ENCODE measurements at regions of chr11 and their contacts with region 1.

Region 1: GRCh38 chr11:117426269-117426685 is 98.6 kb downstream of the CEP164 start:
- DNase-seq: peak; percentile 85 to 91
- H3K4me3 ChIP-seq: no peak overlapping the region
- H3K4me3 Mint-ChIP-seq: no peak overlapping the region
- H3K27ac Mint-ChIP-seq: no peak overlapping the region
- H3K4me1 ChIP-seq: no peaks in the 10 kb centered on the region
- H3K4me1 Mint-ChIP-seq: no peaks in the 10 kb centered on the region
- H3K27me3 ChIP-seq: 0 out of 2 replicates have a peak, but pooled peaks cover 1% of the 10 kb centered on the region
- H3K27me3 Mint-ChIP-seq: peaks cover 12% of the 10 kb centered on the region
- CTCF ChIP-seq: peak; percentile 99 to 100

Region 2: DNA sequence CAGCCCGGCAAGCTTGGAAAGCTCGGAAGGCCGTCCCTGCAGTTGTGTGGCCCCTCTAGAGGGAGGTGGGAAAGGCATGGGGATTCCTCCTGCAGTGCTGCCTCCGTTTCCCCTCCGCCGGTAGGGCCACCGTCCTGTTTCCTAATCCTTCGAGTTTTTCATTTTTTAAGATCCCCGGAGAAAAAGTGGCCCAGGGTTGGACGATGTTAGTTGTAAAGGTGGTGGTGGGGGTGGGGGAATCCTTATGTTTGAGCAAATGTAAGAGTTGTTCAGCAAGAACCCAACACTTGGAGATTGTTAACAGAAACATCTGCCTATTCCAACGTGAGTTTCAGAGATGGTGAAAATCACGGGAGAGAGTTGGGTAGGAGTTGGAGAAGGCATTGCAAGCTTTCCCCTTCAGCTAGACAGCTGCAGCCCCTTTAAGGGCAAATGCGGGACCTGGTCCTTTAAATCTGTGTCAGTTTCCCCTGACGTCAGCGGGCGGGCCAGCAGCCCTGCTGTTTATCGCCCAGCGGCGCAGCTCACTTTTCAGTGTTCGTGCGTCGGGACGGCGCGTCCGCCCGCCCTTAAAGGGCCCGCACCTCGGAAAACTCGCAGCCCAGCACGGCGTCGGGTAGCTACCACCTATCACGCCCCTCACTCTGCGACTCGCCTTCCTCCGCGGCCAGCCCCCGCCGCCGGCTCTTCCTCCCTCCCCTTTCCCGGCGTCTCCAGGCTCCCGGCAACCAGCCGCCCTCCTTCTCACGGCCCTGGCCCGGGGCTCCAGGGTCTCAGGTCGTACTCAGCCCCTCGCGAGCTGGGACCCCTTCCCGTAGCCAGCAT is 247.9 kb before region 1 on chr11 and contains the start of gene SIDT2:
- CTCF ChIA-PET with region 1: no interaction called
- POLR2A ChIA-PET with region 1: no interaction called
- intact Hi-C with region 1: no loop called
- DNase-seq: peak; percentile 96 to 97
- H3K4me3 ChIP-seq: peak within 1 kb of the TSS; percentile 87
- H3K4me3 Mint-ChIP-seq: peak within 1 kb of the TSS; percentile 97
- H3K27ac Mint-ChIP-seq: peak within 1 kb of the TSS; percentile 96
- H3K4me1 ChIP-seq: peaks cover 20% of the 10 kb centered on the region
- H3K4me1 Mint-ChIP-seq: peaks cover 23% of the 10 kb centered on the region
- H3K27me3 ChIP-seq: no peaks in the 10 kb centered on the region
- H3K27me3 Mint-ChIP-seq: no peaks in the 10 kb centered on the region
- CTCF ChIP-seq: no peak
- total RNA-seq, gene SIDT2: 57.2 and 61.7 TPM in 2 replicates

Region 3: GRCh38 chr11:117410861-117411710 is 15.2 kb before region 1 on chr11:
- CTCF ChIA-PET with region 1: interaction called, 15 read pairs
- POLR2A ChIA-PET with region 1: no interaction called
- intact Hi-C with region 1: no loop called
- DNase-seq: peak in 1 of 2 experiments; percentile 35
- H3K4me3 ChIP-seq: no peak overlapping the region
- H3K4me3 Mint-ChIP-seq: no peak overlapping the region
- H3K27ac Mint-ChIP-seq: no peak overlapping the region
- H3K4me1 ChIP-seq: no peaks in the 10 kb centered on the region
- H3K4me1 Mint-ChIP-seq: no peaks in the 10 kb centered on the region
- H3K27me3 ChIP-seq: no peaks in the 10 kb centered on the region
- H3K27me3 Mint-ChIP-seq: no peaks in the 10 kb centered on the region
- CTCF ChIP-seq: no peak

Region 4: DNA sequence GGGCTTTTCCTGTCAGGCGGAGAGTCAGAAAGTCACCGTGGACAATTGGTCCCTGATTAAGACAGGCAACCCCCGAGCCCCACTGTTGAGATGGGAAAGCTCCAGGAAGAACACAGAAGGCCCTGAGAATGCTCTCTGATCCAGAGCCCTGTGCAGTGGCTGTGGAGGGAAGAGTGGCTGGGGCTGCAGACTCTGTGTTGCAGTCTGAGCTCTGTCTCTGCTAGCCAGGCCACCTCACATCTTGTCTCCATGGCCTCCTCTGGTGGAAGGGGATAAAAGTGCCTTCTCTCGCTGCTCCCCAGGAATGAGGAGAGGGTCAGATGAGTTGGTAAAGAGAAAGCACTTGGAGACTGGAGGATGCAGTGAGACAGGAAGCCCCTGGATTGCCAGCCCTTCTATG is 42.6 kb after region 1 on chr11:
- CTCF ChIA-PET with region 1: interaction called, 11 read pairs
- POLR2A ChIA-PET with region 1: no interaction called
- intact Hi-C with region 1: no loop called
- DNase-seq: no peak
- H3K4me3 ChIP-seq: no peak overlapping the region
- H3K4me3 Mint-ChIP-seq: no peak overlapping the region
- H3K27ac Mint-ChIP-seq: no peak overlapping the region
- H3K4me1 ChIP-seq: no peaks in the 10 kb centered on the region
- H3K4me1 Mint-ChIP-seq: no peaks in the 10 kb centered on the region
- H3K27me3 ChIP-seq: peaks cover 2% of the 10 kb centered on the region; the same call in 1 of the 2 replicates
- H3K27me3 Mint-ChIP-seq: peaks cover 28% of the 10 kb centered on the region
- CTCF ChIP-seq: peak in 1 of 2 experiments; percentile 45

Region 5: DNA sequence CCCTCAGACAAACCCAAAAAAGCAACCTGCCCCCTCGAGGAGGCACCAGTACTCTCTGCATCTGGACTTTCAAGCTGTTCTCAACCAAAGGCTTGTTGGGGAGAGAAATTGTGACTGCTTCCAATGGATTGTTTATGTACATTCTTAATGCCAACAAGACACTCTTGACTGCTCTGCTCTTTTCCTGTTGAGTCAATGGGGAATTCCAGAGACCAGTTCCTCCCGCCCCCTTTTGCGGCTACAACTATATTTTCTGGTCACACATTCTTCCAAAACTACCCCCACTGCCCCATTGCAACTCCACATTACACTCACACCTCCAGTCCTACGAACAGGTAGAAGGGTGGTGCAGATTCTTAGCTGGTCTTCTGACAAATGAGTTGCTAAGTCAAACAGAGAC is 183.8 kb after region 1 on chr11:
- CTCF ChIA-PET with region 1: interaction called, 10 read pairs
- POLR2A ChIA-PET with region 1: no interaction called
- intact Hi-C with region 1: no loop called
- DNase-seq: no peak
- H3K4me3 ChIP-seq: no peak overlapping the region
- H3K4me3 Mint-ChIP-seq: no peak overlapping the region
- H3K27ac Mint-ChIP-seq: no peak overlapping the region
- H3K4me1 ChIP-seq: no peaks in the 10 kb centered on the region
- H3K4me1 Mint-ChIP-seq: no peaks in the 10 kb centered on the region
- H3K27me3 ChIP-seq: peaks cover 8% of the 10 kb centered on the region; the same call in 1 of the 2 replicates
- H3K27me3 Mint-ChIP-seq: peaks cover 31% of the 10 kb centered on the region
- CTCF ChIP-seq: no peak

Region 6: GRCh38 chr11:117631336-117632140 is 205.3 kb after region 1 on chr11:
- CTCF ChIA-PET with region 1: interaction called, 17 read pairs
- POLR2A ChIA-PET with region 1: no interaction called
- intact Hi-C with region 1: no loop called
- DNase-seq: no peak
- H3K4me3 ChIP-seq: no peak overlapping the region
- H3K4me3 Mint-ChIP-seq: no peak overlapping the region
- H3K27ac Mint-ChIP-seq: no peak overlapping the region
- H3K4me1 ChIP-seq: no peaks in the 10 kb centered on the region
- H3K4me1 Mint-ChIP-seq: no peaks in the 10 kb centered on the region
- H3K27me3 ChIP-seq: peaks cover 6% of the 10 kb centered on the region; the same call in 1 of the 2 replicates
- H3K27me3 Mint-ChIP-seq: peaks cover 19% of the 10 kb centered on the region
- CTCF ChIP-seq: no peak

Region 7: GRCh38 chr11:117817368-117818040 is 391.2 kb after region 1 on chr11:
- CTCF ChIA-PET with region 1: interaction called, 122 read pairs
- POLR2A ChIA-PET with region 1: no interaction called
- intact Hi-C with region 1: loop called (anchors 1 kb)
- DNase-seq: peak; percentile 86 to 93
- H3K4me3 ChIP-seq: no peak overlapping the region
- H3K4me3 Mint-ChIP-seq: peak overlapping the region; percentile 37
- H3K27ac Mint-ChIP-seq: no peak overlapping the region
- H3K4me1 ChIP-seq: peaks cover 52% of the 10 kb centered on the region
- H3K4me1 Mint-ChIP-seq: peaks cover 23% of the 10 kb centered on the region
- H3K27me3 ChIP-seq: no peaks in the 10 kb centered on the region
- H3K27me3 Mint-ChIP-seq: no peaks in the 10 kb centered on the region
- CTCF ChIP-seq: peak; percentile 100